Activated T-helper 2 cell treated with anti-CD3 and anti-CD28 coated beads, Interferon-gamma antibody, Interleukin-2, Interleukin-4, amounts not matched to agents 10 μg/mL and 5 μg/mL and 100 μg/mL, durations not matched to agents 14 hours and 24 hours and 36 hours (primary cell): ENCODE measurements at regions of chr6 and their contacts with region 1.

Region 1: DNA sequence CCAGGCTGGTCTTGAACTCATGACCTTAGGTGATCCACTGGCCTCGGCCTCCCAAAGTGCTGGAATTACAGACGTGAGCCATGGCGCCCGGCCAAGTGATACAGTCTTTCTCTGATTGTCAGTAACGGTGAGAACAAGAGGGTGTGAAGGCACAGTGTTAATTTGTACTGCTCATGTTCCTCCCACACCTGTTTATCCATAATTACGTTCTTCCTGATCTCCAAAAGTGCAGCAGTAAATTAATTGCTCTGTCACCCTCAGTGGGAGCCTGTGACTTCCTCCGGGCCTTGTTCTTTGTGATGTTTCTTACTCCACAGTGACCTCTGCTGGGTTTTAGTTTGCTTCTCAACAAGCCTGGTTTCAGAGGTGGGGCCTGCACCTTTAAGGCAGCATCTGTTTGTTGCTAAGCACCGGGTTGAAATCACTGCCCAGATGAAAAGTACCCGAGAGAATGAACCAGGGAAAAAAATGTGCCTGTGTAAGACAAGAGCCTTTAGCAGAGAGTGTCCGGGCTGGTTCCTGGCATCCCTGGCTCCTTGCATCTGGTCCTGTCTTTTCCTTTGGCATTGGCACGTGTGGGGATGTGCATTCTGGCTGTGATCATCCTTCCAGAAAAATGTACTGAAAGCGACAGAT is 89.1 kb upstream of the CLDN20 start:
- DNase-seq: peak; percentile 63
- H3K4me3 Mint-ChIP-seq: no peak overlapping the region
- H3K27ac Mint-ChIP-seq: peak overlapping the region; percentile 82
- H3K4me1 Mint-ChIP-seq: peaks cover 41% of the 10 kb centered on the region
- H3K27me3 Mint-ChIP-seq: no peaks in the 10 kb centered on the region

Region 2: DNA sequence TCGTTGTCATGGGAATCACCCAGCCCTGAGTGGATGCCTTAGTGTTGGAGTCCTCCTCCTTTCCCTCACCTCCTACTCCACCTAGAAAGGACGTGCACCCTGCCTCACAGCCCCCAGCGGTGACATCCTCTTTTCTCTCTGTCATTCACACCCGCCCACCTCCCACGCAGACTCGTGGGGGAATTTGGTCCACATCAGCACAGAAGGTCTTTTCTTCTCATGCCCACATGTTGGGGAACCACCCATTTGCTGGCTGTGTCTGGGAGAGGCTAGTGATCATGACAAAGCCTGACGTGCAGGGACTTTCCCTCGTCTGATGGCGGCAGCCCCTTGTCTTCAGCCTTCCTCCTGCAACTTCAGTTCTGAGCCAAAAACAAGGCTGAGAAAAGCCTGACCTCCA is 568.2 kb before region 1 on chr6:
- intact Hi-C with region 1: loop called (anchors 5 kb)
- DNase-seq: peak; percentile 26
- H3K4me3 Mint-ChIP-seq: peak overlapping the region; percentile 5
- H3K27ac Mint-ChIP-seq: peak overlapping the region; percentile 71
- H3K4me1 Mint-ChIP-seq: peaks cover 38% of the 10 kb centered on the region
- H3K27me3 Mint-ChIP-seq: peaks cover 10% of the 10 kb centered on the region

Region 3: GRCh38 chr6:154868143-154868594 is 306.5 kb before region 1 on chr6:
- intact Hi-C with region 1: loop called (anchors 1 kb)
- DNase-seq: no peak
- H3K4me3 Mint-ChIP-seq: no peak overlapping the region
- H3K27ac Mint-ChIP-seq: no peak overlapping the region
- H3K4me1 Mint-ChIP-seq: peaks cover 6% of the 10 kb centered on the region
- H3K27me3 Mint-ChIP-seq: no peaks in the 10 kb centered on the region

Region 4: GRCh38 chr6:155050311-155050710 is 124.4 kb before region 1 on chr6:
- intact Hi-C with region 1: loop called (anchors 1 kb)
- DNase-seq: peak; percentile 22
- H3K4me3 Mint-ChIP-seq: peak overlapping the region; percentile 66
- H3K27ac Mint-ChIP-seq: peak overlapping the region; percentile 96
- H3K4me1 Mint-ChIP-seq: peaks cover 30% of the 10 kb centered on the region
- H3K27me3 Mint-ChIP-seq: no peaks in the 10 kb centered on the region

Region 5: DNA sequence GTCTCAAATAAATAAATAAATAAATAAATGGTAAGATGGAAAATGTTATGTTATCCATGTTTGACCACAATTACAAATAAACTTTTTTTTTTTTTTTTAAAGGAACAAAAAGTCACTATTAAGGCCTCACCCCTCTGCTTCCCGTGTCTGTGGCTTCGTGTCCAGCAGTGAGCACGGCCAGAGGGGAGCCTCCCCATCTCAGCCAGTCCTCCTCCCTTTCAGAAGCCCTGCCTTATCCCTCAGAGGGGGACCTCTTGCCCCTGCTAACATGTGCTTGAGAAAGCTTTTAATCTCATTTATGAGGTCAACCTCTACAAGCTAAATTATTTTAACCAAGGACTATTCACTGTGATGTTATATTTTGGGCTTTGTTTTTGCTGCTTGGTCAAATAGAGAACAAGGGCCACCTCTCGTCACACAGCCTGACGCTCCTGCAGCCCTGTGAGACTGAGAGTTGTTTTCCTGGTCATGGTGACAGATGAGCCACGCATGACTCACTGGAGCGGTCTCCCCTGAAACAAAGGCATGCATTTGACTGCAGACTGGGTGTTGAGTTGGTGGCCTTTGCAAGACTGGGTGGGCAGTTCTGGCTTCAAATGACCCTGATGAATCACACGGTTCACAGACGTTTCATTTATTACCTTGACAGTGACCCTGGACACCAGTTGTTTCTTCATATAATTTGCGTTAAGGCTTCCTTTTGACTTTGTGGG is 47.8 kb before region 1 on chr6:
- intact Hi-C with region 1: loop called (anchors 1 kb)
- DNase-seq: no peak
- H3K4me3 Mint-ChIP-seq: peak overlapping the region; percentile 39
- H3K27ac Mint-ChIP-seq: peak overlapping the region; percentile 99
- H3K4me1 Mint-ChIP-seq: peaks cover 47% of the 10 kb centered on the region
- H3K27me3 Mint-ChIP-seq: no peaks in the 10 kb centered on the region

Region 6: DNA sequence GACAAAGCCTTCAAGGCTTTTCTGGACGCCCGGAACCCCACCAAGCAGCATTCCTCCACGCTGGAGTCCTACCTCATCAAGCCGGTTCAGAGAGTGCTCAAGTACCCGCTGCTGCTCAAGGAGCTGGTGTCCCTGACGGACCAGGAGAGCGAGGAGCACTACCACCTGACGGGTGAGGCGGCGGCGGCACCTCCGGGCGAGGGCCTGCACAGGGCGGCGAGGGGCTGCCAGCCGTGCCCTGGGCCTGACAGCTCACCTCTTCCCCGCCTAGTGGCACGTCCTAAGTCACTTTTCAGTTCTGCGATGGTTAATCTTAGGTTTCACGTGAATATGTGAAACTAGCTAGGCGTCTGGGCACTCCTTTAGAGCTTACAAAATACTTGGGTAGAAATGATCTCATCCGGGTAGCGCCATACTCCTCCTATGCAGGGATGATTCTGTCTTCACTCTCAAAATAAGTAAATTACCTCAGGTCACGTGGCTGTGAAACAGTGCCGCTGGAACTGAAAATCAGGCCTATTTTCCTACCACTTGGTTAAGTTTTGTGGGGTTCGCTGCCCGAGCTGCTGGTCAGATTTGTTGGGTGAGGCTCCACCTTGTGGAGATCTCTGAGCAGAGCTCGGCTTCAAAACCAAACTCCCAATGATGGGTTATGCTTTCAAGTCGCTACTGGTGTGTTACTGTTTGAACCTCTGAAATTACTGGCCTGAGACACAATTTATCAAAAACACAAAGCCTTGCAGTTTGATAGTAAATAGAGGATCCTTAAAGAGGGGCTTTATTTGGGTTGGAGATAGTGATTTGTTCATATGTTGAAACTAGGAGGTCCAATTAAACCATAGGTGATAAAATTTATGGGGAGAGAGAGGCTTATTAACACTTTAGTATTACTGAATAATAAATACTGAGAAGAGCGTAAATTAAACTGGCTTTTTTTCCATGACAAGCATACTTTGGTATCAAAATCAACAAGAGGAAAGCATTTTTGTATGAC is 73.6 kb after region 1 on chr6:
- intact Hi-C with region 1: loop called (anchors 1 kb)
- DNase-seq: no peak
- H3K4me3 Mint-ChIP-seq: no peak overlapping the region
- H3K27ac Mint-ChIP-seq: no peak overlapping the region
- H3K4me1 Mint-ChIP-seq: no peaks in the 10 kb centered on the region
- H3K27me3 Mint-ChIP-seq: no peaks in the 10 kb centered on the region

Region 7: GRCh38 chr6:155418017-155418761 is 243.5 kb after region 1 on chr6:
- intact Hi-C with region 1: loop called (anchors 5 kb)
- DNase-seq: peak; percentile 40
- H3K4me3 Mint-ChIP-seq: peak overlapping the region; percentile 61
- H3K27ac Mint-ChIP-seq: peak overlapping the region; percentile 96
- H3K4me1 Mint-ChIP-seq: peaks cover 45% of the 10 kb centered on the region
- H3K27me3 Mint-ChIP-seq: no peaks in the 10 kb centered on the region